Lower leg skin (tissue), 4 donors: ENCODE measurements at regions of chr4 and their contacts with region 1.

Region 1: GRCh38 chr4:48305508-48305907 is 35.8 kb upstream of the SLAIN2 start:
- DNase-seq: no peak
- H3K4me3 ChIP-seq: no peak overlapping the region
- CTCF ChIP-seq: no peak
- POLR2A ChIP-seq: no peak

Region 2: GRCh38 chr4:48269861-48270522 is 35.5 kb before region 1 on chr4:
- intact Hi-C with region 1: no loop called
- DNase-seq: peak; percentile 92 to 99
- H3K4me3 ChIP-seq: peak overlapping the region; percentile 72
- CTCF ChIP-seq: no peak
- POLR2A ChIP-seq: no peak

Region 3: DNA sequence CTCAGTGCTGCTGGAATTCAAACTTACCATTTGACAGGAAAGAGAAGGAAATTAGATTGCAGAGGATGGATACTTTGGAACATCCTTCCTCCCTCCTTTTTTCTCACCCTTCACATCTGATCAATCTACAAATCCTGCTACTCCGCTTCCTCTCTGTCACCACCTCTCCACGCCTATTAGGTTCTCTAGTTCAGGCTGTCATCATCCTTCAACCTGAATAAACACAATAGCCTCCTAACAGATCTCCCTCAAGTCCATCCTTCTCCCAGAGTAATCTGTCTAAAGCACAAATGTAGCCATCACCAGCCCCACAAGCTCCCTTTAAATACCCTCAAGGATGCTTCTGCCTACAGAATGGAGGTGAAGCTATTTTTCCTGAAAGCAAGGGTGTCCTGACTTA is 15.8 kb after region 1 on chr4:
- intact Hi-C with region 1: loop called (anchors 2 kb)
- DNase-seq: no peak
- H3K4me3 ChIP-seq: no peak overlapping the region
- CTCF ChIP-seq: no peak
- POLR2A ChIP-seq: no peak